Activated naive CD4-positive, alpha-beta T cell treated with anti-CD3 and anti-CD28 coated beads for 36 hours (primary cell): ENCODE measurements at regions of chr1 and their contacts with region 1.

Region 1: GRCh38 chr1:18100491-18101063 is 7.0 kb upstream of the IGSF21 start:
- DNase-seq: peak; percentile 76
- H3K4me3 Mint-ChIP-seq: no peak overlapping the region
- H3K27ac Mint-ChIP-seq: no peak overlapping the region
- H3K4me1 Mint-ChIP-seq: no peaks in the 10 kb centered on the region
- H3K27me3 Mint-ChIP-seq: peaks cover 29% of the 10 kb centered on the region

Region 2: DNA sequence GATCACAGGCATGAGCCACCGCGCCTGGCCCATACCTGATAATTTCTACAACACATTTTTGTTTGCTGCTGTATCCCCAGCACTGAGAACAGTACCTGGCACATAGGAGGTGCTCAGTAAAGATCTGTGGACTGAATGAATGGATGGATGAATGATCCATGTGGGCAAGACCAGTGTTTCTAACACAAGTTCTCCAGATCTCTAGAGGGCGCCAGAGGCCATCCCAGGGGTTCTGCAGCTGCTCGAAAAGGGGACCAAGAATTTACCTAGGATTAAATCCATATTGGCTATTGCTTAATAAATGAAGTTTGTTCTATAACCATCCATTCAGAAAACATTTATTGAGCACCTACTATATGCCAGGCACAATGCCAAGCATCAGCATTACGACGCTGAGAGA is 177.7 kb before region 1 on chr1:
- CTCF ChIA-PET with region 1: interaction called, 8 read pairs
- intact Hi-C with region 1: loop called (anchors 1 kb)
- DNase-seq: peak; percentile 43
- H3K4me3 Mint-ChIP-seq: no peak overlapping the region
- H3K27ac Mint-ChIP-seq: no peak overlapping the region
- H3K4me1 Mint-ChIP-seq: peaks cover 2% of the 10 kb centered on the region
- H3K27me3 Mint-ChIP-seq: peaks cover 23% of the 10 kb centered on the region

Region 3: GRCh38 chr1:17984583-17984982 is 116.0 kb before region 1 on chr1:
- CTCF ChIA-PET with region 1: no interaction called
- intact Hi-C with region 1: loop called (anchors 1 kb)
- DNase-seq: peak; percentile 45
- H3K4me3 Mint-ChIP-seq: no peak overlapping the region
- H3K27ac Mint-ChIP-seq: no peak overlapping the region
- H3K4me1 Mint-ChIP-seq: no peaks in the 10 kb centered on the region
- H3K27me3 Mint-ChIP-seq: peaks cover 15% of the 10 kb centered on the region

Region 4: GRCh38 chr1:18118078-18118477 is 17.5 kb after region 1 on chr1:
- CTCF ChIA-PET with region 1: no interaction called
- intact Hi-C with region 1: no loop called
- DNase-seq: no peak
- H3K4me3 Mint-ChIP-seq: no peak overlapping the region
- H3K27ac Mint-ChIP-seq: no peak overlapping the region
- H3K4me1 Mint-ChIP-seq: no peaks in the 10 kb centered on the region
- H3K27me3 Mint-ChIP-seq: peaks cover 45% of the 10 kb centered on the region

Region 5: DNA sequence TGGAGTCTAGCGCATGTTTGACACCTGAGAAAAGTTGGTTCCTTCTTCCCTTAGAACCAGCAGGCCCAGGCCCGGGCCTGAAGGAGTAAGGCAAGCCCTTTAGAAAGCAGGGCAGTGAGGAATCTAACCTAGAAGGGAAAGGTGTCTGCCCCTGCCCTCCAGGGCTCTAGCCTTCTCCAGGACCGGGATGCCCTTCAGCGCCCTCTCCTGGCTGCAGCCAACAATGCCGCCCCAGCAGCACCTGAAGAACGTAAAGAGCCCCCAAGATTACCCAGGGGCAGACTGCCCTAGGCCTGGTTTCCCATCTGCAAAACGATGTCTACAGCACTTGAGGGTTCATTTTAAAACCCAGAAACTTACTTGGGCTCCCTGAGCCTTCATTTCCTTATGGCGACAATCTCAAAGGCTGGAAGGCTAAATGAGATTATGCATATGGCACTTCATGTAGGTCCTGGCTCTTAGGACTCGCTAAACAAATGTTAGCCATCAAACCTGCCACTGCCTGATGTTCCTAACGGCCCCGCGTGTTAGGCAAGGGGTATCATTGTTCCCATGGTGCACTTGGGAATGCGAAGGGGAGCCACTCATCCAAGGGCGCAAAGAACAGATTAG is 273.4 kb after region 1 on chr1:
- CTCF ChIA-PET with region 1: no interaction called
- intact Hi-C with region 1: no loop called
- DNase-seq: peak; percentile 33
- H3K4me3 Mint-ChIP-seq: no peak overlapping the region
- H3K27ac Mint-ChIP-seq: no peak overlapping the region
- H3K4me1 Mint-ChIP-seq: no peaks in the 10 kb centered on the region
- H3K27me3 Mint-ChIP-seq: peaks cover 11% of the 10 kb centered on the region